HepG2 (cell line): ENCODE measurements at regions of chr9 and their contacts with region 1.

Region 1: GRCh38 chr9:125484350-125485282 is 222.4 kb downstream of the MAPKAP1 start:
- DNase-seq: no peak
- ATAC-seq: no peak
- H3K4me3 ChIP-seq: no peak overlapping the region
- H3K27ac ChIP-seq: peak overlapping the region; percentile 39
- H3K4me1 ChIP-seq: peaks cover 29% of the 10 kb centered on the region
- H3K27me3 ChIP-seq: no peaks in the 10 kb centered on the region
- CTCF ChIP-seq: no peak
- EP300 ChIP-seq: no peak
- POLR2A ChIP-seq: no peak
- RAD21 ChIP-seq: no peak

Region 2: DNA sequence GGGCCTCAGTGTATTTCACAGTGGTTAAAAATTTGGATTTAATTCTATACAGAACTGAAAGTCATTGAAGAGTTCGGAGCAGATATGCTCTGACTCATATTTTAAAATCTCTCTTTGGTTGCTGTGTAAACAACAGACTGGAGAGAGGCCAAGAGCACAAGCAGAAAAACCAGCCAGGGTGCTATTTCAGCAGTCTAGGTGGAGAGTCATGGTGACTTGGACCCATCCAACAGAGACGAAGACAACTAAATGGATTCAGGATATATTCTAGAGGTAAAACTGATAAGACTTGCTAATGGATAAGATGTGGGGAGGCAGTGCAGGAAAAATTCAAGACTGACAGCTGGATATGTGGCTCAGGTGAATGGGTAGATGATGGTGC is 53.5 kb after region 1 on chr9:
- CTCF ChIA-PET with region 1: no interaction called
- POLR2A ChIA-PET with region 1: no interaction called
- in situ Hi-C with region 1: no loop called
- intact Hi-C with region 1: loop called (anchors 10 kb)
- DNase-seq: peak; percentile 84
- ATAC-seq: peak; percentile 96
- H3K4me3 ChIP-seq: peak overlapping the region in 1 of 3 experiments; percentile 8; a peak in 1 of 6 replicates
- H3K27ac ChIP-seq: peak overlapping the region; percentile 51
- H3K4me1 ChIP-seq: peaks cover 36% of the 10 kb centered on the region
- H3K27me3 ChIP-seq: no peaks in the 10 kb centered on the region
- CTCF ChIP-seq: no peak
- EP300 ChIP-seq: no peak
- POLR2A ChIP-seq: no peak
- RAD21 ChIP-seq: no peak